ENCODE measurements at regions of chr1 and their contacts with region 1.

Region 1: DNA sequence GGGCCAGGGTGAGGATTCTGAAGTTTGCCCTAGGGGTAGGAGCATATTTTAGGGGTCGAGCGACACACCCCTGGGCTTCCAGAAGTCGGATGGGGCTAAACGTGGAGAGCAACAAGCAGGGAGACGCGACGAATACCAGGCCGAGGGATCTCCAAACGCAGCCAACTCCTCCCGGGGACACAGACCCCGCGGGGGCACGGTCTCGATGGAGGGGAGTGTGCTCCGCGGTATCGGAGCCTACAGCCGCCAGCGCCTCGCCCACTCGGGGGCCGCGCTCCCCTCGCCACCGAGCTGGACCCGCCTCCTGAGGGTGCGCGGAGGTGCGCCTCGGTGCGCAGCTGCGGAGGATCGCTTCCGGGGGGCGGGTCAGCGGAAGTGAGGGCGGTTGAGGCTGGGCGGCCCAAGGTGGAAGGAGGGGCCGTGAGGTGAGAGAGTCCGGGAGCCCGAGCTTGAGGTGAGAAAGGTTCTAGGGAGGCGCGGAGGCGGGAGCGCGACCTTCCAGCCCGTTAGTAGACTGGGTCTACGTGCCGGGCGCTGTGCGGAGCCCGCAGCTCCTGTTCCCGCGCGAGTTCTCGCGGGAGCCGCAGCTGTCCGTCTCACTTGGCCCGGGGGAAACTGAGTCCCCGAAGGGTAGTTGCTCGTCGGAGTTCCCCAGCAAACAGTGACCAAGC is at the start of gene MTFR1L:
- DNase-seq: peak; percentile 89 to 95 (median 92)
- ATAC-seq: peak; percentile 81 to 82
- H3K4me3 Mint-ChIP-seq: peak within 1 kb of the TSS; percentile 91 to 99 (median 94)
- H3K27ac Mint-ChIP-seq: peak within 1 kb of the TSS; percentile 95 to 99 (median 97)
- H3K4me1 Mint-ChIP-seq: peaks cover 21 to 47% (median 40%) of the 10 kb centered on the region in 4 donors
- H3K27me3 Mint-ChIP-seq: no peaks in the 10 kb centered on the region
- polyA plus RNA-seq, gene MTFR1L: 34.3 to 42.6 (median 40.9) TPM

Region 2: DNA sequence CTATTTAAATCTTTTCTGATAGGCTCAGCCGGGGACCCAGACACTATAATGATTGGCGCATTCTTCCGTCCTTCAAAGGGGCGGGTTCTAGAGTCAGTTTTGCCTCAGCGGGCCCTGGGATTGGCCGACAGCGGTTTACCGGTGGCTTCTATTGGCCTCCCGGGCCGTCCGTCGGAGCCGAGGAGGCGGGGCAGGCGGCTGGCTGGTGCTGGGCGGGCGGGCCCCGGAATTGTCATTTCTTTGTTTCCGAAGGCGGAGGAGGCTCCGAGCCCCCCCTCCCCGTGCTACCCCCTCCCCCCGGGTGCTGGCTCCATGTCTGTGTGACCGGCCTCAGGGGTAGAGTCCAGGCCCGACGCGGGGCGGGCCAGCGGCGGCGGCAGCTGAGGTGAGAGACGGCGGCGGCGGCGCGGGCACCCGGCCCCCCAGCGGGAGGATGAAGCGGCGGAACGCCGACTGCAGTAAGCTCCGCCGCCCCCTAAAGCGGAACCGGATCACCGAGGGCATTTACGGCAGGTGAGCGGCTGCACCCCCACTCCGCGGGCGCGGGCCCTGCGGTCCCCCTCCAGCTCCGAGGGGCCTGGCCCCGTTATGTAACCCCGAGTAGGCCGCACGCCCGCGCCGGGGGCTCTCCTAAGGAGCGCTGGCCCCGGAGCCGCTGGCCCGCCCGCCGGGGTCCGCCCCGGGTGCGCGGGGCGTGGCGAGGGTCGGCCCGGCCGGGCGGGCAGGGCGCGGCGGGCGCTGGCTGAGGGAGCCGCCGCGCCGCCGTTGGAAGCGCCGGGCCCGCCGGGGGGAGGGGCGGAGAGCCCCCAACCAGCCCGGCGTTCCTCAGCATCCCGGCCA is 388.8 kb before region 1 on chr1 and contains the start of gene MACO1:
- POLR2A ChIA-PET with region 1: interaction called, 10 read pairs
- DNase-seq: peak; percentile 94 to 99 (median 98)
- ATAC-seq: peak; percentile 84
- H3K4me3 Mint-ChIP-seq: peak within 1 kb of the TSS; percentile 93 to 99 (median 98)
- H3K27ac Mint-ChIP-seq: peak within 1 kb of the TSS; percentile 98 to 100 (median 100)
- H3K4me1 Mint-ChIP-seq: peaks cover 26 to 54% (median 47%) of the 10 kb centered on the region in 4 donors
- H3K27me3 Mint-ChIP-seq: no peaks in the 10 kb centered on the region
- polyA plus RNA-seq, gene MACO1: 7.6 to 8.8 (median 7.6) TPM

Region 3: DNA sequence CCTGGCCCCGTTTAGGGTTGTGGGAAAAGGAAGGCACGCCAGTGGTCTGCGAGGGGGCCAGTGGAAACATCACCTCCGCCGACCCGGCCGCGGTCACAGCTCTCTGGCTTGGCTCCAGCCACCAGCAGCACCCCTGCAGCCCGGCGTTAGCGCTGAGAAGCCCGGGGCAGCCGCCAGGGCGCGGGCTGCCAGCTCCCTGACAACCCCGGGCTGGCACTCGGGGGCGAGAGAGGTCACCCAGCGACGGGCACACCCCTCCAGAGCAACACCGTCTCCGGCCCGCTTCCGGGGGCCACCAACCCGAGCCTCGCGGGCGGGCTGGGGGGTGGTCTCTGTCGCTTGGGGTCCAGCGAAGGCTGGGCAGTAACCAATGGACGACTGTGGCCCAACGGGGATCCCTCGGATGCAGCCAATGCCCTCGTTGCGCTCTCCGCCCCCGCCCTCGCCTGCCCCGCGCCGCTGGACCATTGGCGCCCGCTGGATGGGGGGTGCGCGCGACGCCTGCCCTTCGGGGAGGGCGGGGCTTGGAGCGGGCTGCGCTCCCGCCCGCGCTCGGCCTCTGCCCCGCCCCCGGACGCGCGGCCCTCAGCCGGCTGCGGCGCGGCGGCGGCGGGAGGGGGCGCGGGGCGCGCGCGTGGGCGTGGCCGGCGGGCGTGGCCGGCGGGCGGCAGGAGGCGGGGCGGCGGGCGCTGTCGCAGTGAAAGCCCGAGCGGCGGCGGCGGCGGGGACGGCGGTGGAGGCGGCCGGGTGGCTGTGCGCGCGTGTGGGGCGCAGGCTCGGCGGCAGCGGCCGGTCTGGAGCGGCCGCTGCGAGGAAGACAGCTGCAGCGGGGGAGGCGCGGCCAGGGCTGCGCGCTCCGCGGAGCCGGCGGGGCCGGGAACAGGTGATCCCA is 203.4 kb before region 1 on chr1 and contains the start of gene MAN1C1:
- POLR2A ChIA-PET with region 1: interaction called, 10 read pairs
- DNase-seq: peak; percentile 70 to 90 (median 83)
- ATAC-seq: peak; percentile 62 to 65
- H3K4me3 Mint-ChIP-seq: peak within 1 kb of the TSS; percentile 69 to 99 (median 84)
- H3K27ac Mint-ChIP-seq: peak within 1 kb of the TSS; percentile 42 to 91 (median 82)
- H3K4me1 Mint-ChIP-seq: peaks cover 39 to 54% (median 51%) of the 10 kb centered on the region in 4 donors
- H3K27me3 Mint-ChIP-seq: peaks cover 0 to 5% (median 0%) of the 10 kb centered on the region in 5 donors
- polyA plus RNA-seq, gene MAN1C1: 11.3 to 48.3 (median 11.7) TPM

Region 4: GRCh38 chr1:25796811-25797458 is 22.8 kb before region 1 on chr1:
- POLR2A ChIA-PET with region 1: interaction called, 12 read pairs
- DNase-seq: peak; percentile 70 to 90 (median 83)
- ATAC-seq: peak; percentile 52 to 70
- H3K4me3 Mint-ChIP-seq: peak overlapping the region; percentile 50 to 92 (median 83)
- H3K27ac Mint-ChIP-seq: peak overlapping the region; percentile 91 to 99 (median 96)
- H3K4me1 Mint-ChIP-seq: peaks cover 34 to 74% (median 65%) of the 10 kb centered on the region in 4 donors
- H3K27me3 Mint-ChIP-seq: peaks cover 0 to 2% (median 0%) of the 10 kb centered on the region in 5 donors

Region 5: DNA sequence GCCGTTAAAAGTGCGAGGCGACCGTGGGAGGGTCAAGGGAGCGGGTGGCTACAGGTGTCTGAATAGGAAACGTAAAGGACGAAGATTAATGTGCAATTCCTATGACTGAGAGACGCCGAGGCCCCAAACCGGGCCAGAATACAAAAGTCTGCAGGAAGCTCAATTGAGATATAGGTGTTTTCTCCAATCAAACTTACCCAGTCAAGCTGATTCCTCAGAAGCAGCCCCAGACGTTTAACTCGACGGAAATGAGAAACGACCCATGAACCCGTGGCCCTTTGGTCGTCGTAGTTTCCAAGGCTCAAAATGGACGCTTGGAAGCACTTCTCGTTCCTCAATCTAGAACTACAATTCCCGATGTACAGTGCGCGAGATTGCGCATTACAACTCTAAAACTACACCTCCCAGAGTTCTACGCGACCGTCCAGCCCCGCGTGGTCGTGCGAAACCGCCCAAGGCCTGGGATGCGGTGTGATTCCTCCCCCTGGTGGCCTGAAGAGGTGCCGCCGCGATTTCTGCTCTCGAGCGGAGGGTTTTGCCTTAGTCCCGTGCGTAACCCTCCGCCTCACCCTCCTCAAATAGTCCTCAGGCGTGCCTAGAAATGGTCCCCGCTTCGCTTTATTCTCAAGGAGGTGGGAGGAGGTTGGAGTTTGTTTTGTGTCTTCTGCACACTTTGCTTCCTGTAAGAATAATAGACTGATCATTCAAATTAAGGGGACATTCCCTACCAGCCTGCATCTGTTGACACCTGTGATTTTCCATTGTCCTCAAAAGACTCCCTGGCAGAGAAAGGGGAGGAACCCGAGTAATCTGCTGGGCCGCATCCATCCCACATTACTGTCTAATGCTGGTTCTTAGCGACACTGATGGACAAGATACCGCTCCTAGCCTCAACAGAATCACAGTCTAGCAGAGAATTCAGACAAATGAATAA is 178.4 kb after region 1 on chr1 and contains the start of gene PAFAH2:
- POLR2A ChIA-PET with region 1: interaction called, 12 read pairs
- DNase-seq: peak; percentile 89 to 99 (median 96)
- ATAC-seq: peak; percentile 95 to 97
- H3K4me3 Mint-ChIP-seq: peak within 1 kb of the TSS; percentile 92 to 98 (median 97)
- H3K27ac Mint-ChIP-seq: peak within 1 kb of the TSS; percentile 96 to 100 (median 99)
- H3K4me1 Mint-ChIP-seq: peaks cover 18 to 41% (median 36%) of the 10 kb centered on the region in 4 donors
- H3K27me3 Mint-ChIP-seq: no peaks in the 10 kb centered on the region
- polyA plus RNA-seq, gene PAFAH2: 16.4 to 25.5 (median 17.3) TPM

Measured in naive thymus-derived CD8-positive, alpha-beta T cell (primary cell).